Activated B cell treated with CpG ODN at 0.5 μM for 24 hours (primary cell): ENCODE measurements at regions of chr11 and their contacts with region 1.

Region 1: DNA sequence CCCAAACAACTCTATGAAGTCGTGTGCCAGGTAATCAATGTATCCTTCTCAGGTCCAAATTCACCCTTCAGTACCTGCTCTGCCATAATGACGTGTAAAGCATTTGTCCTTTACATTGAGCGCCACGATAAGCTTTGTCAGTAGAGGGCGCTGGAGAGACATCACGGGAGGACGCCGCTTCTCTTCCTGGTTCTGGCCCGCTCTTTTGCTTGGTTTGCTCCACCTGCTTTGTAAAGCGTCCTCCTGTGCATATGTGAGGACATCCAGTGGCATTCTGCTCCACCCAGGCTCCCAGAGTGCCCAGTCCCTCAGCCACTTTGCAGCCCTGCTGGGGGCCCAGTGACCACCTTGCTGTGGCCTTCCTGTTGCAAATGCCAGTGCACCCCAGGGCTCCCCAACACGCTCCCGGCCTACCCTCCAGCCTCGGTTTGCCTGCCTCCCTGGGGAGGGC is 61.1 kb downstream of the WT1 start:
- DNase-seq: no peak
- ATAC-seq: no peak
- H3K4me3 Mint-ChIP-seq: no peak overlapping the region
- H3K27ac Mint-ChIP-seq: no peak overlapping the region
- H3K4me1 Mint-ChIP-seq: no peaks in the 10 kb centered on the region
- H3K27me3 Mint-ChIP-seq: no peaks in the 10 kb centered on the region
- CTCF ChIP-seq: no peak

Region 2: GRCh38 chr11:32312865-32313403 is 61.4 kb before region 1 on chr11:
- CTCF ChIA-PET with region 1: no interaction called
- POLR2A ChIA-PET with region 1: no interaction called
- intact Hi-C with region 1: loop called (anchors 10 kb)
- DNase-seq: no peak
- ATAC-seq: no peak
- H3K4me3 Mint-ChIP-seq: no peak overlapping the region
- H3K27ac Mint-ChIP-seq: no peak overlapping the region
- H3K4me1 Mint-ChIP-seq: no peaks in the 10 kb centered on the region
- H3K27me3 Mint-ChIP-seq: peaks cover 10% of the 10 kb centered on the region
- CTCF ChIP-seq: no peak